Left cardiac atrium (tissue), 4 donors: ENCODE measurements at regions of chr2 and their contacts with region 1.

Region 1: DNA sequence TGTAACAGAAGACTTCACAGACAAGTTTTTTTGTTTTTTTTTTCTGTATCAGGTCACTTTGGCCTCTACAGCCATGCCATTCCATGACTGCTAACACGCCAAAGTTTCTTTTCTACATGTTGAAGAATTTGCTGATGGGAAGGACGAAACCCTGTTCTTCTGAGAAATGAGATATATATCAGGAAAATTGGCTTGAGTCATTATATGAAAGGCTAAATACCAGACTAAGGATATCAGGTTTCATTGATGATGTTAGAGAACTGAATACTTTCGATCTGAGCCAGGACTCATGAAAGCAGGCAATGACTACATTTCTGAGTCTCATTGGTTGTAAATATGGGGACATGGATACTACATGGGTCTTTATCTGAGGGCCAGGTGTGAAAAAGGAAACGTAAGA is 181.5 kb downstream of the OSR1 start:
- DNase-seq: no peak
- ATAC-seq: no peak

Region 2: DNA sequence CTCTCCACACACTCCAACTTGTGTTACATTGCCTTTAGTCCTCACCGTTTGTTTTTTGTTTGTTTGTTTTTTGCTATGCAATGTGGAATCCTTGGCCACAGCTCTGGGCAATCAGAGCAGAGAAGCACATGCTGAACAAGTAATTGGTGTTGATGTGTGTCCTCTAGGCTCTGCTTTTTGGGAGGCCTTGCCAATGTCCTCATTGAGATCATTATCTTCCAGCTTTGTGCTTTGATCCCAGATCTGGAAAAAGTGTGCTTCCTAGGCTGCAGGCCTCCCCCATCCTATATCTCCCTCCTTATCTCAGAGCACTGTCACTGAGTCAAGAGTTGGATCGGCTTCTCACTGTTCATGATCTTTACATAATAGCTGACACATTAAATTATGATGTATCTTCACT is 155.5 kb after region 1 on chr2:
- intact Hi-C with region 1: loop called in 1 of 2 experiments (anchors 5 kb)
- DNase-seq: no peak
- ATAC-seq: no peak